Calu3 (cell line): ENCODE measurements at regions of chr2 and their contacts with region 1.

Region 1: DNA sequence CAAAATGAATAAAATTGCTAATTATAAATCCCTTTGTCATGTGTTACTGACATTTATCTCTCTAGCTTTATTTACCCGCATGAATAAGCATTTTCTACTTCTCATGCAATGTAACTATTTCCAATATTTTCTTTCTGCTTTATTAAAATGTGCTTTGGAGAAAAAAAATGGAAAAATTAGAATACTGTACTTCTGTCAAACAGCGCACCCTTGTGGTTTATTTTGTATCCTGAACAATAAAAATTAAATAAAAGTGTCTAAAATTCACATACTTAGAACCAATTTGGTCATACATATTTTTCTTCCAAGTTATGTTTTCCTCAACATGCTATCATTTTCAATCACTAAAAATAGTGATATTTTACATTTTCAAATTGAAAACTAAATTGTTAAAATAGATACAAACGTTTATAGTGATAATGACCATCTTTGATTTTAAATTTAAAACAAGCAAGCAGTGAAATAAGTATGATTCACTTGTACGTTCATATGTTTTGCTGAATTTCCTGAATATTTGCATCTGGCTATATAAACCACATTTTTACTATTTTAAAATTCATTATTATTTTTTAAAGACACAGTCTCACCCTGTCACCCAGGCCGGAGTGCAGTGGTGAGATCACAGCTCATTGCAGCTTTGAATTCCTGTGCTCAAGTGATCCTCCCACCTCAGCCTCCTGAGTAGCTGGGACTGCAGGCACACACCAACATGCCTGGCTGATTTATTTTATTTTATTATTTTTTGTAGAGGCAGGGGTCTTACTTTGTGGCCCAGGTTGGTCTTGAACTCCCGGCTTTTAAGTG is 95.9 kb upstream of the GRB14 start:
- DNase-seq: peak; percentile 28
- H3K4me3 Mint-ChIP-seq: no peak overlapping the region
- H3K27ac Mint-ChIP-seq: no peak overlapping the region
- H3K4me1 Mint-ChIP-seq: peaks cover 30% of the 10 kb centered on the region
- H3K27me3 Mint-ChIP-seq: no peaks in the 10 kb centered on the region
- CTCF ChIP-seq: peak; percentile 41

Region 2: GRCh38 chr2:164560181-164560792 is 156.9 kb before region 1 on chr2:
- CTCF ChIA-PET with region 1: interaction called, 3 read pairs
- intact Hi-C with region 1: loop called (anchors 1 kb)
- DNase-seq: peak; percentile 23
- H3K4me3 Mint-ChIP-seq: no peak overlapping the region
- H3K27ac Mint-ChIP-seq: no peak overlapping the region
- H3K4me1 Mint-ChIP-seq: peaks cover 9% of the 10 kb centered on the region
- H3K27me3 Mint-ChIP-seq: no peaks in the 10 kb centered on the region
- CTCF ChIP-seq: peak; percentile 61

Region 3: GRCh38 chr2:164599966-164600589 is 117.1 kb before region 1 on chr2:
- CTCF ChIA-PET with region 1: no interaction called
- intact Hi-C with region 1: loop called (anchors 5 kb)
- DNase-seq: peak; percentile 71
- H3K4me3 Mint-ChIP-seq: no peak overlapping the region
- H3K27ac Mint-ChIP-seq: peak overlapping the region; percentile 46
- H3K4me1 Mint-ChIP-seq: peaks cover 10% of the 10 kb centered on the region
- H3K27me3 Mint-ChIP-seq: no peaks in the 10 kb centered on the region
- CTCF ChIP-seq: peak; percentile 93

Region 4: DNA sequence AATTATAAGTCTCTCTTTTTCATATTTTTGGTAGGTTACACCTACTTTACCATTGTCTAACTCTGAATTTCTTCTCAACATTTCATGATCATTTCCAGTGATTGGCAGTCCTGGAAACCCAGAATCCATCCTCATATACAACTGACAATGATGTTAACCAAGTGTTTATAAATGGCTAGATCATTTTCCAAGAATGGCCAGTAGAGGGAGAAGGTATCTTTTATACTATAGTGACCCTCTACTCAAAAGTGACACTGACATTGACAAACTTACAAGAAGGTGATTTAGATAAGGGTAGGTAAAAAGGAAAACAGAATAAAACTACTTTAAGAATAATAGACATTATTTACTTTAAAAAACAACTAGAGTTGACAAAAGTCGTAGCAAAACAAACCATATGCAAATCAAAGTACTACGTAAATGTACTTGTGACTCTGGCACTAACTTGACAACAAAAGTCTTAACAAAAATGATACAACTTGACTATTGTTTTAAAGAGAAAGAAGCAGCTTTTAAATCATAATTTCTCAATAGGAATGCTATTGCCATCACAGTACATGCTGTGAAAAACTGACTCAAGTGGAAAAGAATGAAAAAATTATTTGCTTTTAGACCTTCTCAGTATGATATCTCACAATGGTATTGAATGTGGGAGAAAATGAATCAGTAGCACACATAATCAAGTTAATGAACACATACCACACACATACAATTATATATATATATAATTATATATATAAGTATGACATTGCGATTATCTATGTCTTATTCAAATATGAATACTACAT is 19.3 kb before region 1 on chr2:
- CTCF ChIA-PET with region 1: no interaction called
- intact Hi-C with region 1: loop called (anchors 1 kb)
- DNase-seq: no peak
- H3K4me3 Mint-ChIP-seq: no peak overlapping the region
- H3K27ac Mint-ChIP-seq: no peak overlapping the region
- H3K4me1 Mint-ChIP-seq: peaks cover 19% of the 10 kb centered on the region
- H3K27me3 Mint-ChIP-seq: no peaks in the 10 kb centered on the region
- CTCF ChIP-seq: peak; percentile 40

Region 5: GRCh38 chr2:164810843-164811242 is 93.6 kb after region 1 on chr2:
- CTCF ChIA-PET with region 1: no interaction called
- intact Hi-C with region 1: no loop called
- DNase-seq: no peak
- H3K4me3 Mint-ChIP-seq: no peak overlapping the region
- H3K27ac Mint-ChIP-seq: no peak overlapping the region
- H3K4me1 Mint-ChIP-seq: no peaks in the 10 kb centered on the region
- H3K27me3 Mint-ChIP-seq: no peaks in the 10 kb centered on the region
- CTCF ChIP-seq: no peak